ENCODE measurements at regions of chr17 and their contacts with region 1.

Region 1: DNA sequence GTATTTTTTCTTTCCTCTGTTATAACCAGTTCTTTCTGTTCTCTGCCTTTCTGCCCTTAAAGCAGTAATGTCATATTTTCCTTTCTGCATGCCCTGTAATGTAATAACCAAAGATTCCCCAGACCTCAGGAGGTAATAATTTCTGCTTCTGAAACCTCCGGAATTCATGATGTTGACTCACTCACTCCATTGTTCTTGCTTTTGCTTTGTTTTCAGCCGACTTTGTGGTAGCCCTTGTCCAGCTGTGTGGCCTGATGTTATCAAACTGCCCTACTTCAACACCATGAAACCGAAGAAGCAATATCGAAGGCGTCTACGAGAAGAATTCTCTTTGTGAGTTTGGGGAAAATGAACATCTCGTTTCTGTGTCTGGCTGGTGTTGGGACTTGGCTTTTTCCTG is 55.9 kb downstream of the CDK12 start:
- DNase-seq: no peak
- ATAC-seq: no peak

Region 2: DNA sequence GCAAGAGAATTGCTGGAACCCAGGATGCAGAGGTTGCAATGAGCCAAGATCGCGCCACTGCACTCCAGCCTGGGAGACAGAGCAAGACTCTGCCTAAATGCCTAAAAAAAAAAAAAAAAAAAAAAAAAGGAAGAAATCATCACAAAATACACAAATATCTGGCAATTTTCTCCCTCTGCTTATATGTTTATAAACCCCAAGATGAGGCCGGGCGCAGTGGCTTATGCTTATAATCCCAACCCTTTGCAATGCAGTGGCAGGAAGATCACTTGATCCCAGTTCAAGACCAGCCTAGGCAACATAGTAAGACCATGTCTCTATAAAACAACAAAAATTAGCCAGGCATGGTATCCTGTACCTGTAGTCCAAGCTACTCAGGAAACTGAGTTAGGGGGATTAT is 87.6 kb before region 1 on chr17:
- intact Hi-C with region 1: loop called in 1 of 2 experiments (anchors 10 kb)
- DNase-seq: no peak
- ATAC-seq: no peak

Region 3: DNA sequence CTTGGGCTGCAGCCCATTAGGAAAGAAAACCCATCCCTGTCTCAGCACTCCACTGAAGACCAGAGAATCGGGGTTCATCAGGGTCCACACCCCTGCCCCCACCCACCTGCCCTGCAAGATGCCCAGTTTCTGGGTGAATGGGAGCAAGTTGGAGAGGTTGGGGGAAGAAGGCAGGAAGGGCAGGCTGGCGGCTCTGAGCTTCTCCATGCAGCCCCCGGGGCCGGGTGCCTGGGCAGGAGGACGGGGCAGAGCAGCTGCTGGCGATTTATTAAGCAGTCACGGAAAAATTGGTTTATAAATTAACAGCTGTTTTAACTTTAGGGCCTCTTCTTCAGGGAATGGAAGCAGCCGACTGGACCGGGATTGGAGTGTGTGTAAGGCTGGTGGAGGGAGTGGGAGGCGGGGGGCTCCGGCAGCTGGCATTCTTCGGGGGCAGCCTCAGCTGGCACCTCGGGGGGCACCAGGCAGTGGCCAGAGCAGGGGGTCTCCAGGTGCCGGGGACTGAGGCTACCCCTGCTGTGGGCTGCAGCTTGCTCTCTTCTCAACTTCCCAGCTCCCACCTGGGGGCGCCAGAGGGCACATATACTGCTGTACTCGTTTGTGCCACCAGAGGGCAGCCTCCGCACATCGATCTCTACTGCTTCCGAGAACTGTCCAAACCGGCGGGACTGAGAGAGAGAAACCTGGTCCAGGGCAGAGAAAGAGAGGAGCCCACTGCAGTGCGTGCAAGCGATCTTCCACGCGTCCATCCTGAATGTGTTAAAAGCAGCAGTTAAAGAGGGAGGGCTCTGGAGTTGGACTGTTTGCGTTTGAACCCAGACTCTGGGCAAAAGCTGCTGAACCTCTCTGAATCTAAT is 104.5 kb after region 1 on chr17:
- intact Hi-C with region 1: no loop called
- DNase-seq: peak; percentile 85
- ATAC-seq: peak; percentile 69 to 71

Region 4: GRCh38 chr17:39668199-39668966 is 151.2 kb after region 1 on chr17 and contains the start of gene PNMT:
- intact Hi-C with region 1: no loop called
- DNase-seq: peak; percentile 84
- ATAC-seq: peak; percentile 9 to 15
- total RNA-seq, gene PNMT: 9.7 to 11.2 TPM

Measured in left cardiac atrium (tissue), 4 donors.